ENCODE measurements at regions of chr2 and their contacts with region 1.

Region 1: GRCh38 chr2:290090-290722 is 2.3 kb upstream of the ALKAL2 start:
- DNase-seq: peak; percentile 43 to 87 (median 80)
- H3K4me3 ChIP-seq: peak overlapping the region; percentile 40 to 88 (median 69)
- H3K27ac ChIP-seq: peak overlapping the region in 7 of 59 donors; percentile 7 to 45 (median 28)
- H3K27me3 ChIP-seq: peaks cover 0 to 31% (median 11%) of the 10 kb centered on the region in 45 donors
- CTCF ChIP-seq: peak; percentile 14 to 97 (median 84)

Region 2: DNA sequence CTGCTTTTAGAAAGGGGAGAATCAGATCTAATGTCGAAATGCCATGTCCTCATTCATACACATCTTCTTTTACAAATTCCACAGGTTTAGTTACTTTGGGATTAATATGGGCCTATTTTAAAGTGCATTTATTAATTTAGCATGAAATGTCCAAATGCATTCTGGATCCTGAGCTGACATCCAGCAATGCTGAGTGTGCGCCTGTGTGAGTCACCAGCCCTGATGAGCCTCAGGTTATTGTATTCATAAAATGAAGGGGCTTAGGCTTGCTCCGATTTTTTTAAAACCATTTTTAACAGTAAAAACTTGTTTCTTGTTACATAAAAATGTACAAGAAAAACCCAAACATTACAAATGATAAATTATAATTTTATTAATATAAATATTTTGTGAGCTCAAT is 120.5 kb before region 1 on chr2:
- intact Hi-C with region 1: loop called (anchors 1 to 5 kb)
- DNase-seq: no peak
- H3K4me3 ChIP-seq: no peak overlapping the region
- H3K27ac ChIP-seq: no peak overlapping the region
- H3K27me3 ChIP-seq: no peaks in the 10 kb centered on the region
- CTCF ChIP-seq: no peak

Region 3: GRCh38 chr2:175880-176800 is 114.1 kb before region 1 on chr2:
- intact Hi-C with region 1: loop called (anchors 1 to 5 kb)
- DNase-seq: no peak
- H3K4me3 ChIP-seq: peak overlapping the region in 4 of 59 donors; percentile 11 to 32 (median 22)
- H3K27ac ChIP-seq: peak overlapping the region in 19 of 59 donors; percentile 1 to 79 (median 40)
- H3K27me3 ChIP-seq: no peaks in the 10 kb centered on the region
- CTCF ChIP-seq: no peak

Region 4: GRCh38 chr2:254241-254640 is 36.0 kb before region 1 on chr2:
- intact Hi-C with region 1: loop called in 1 of 2 experiments (anchors 5 kb)
- DNase-seq: no peak
- H3K4me3 ChIP-seq: no peak overlapping the region
- H3K27ac ChIP-seq: no peak overlapping the region
- H3K27me3 ChIP-seq: no peaks in the 10 kb centered on the region
- CTCF ChIP-seq: no peak

Region 5: GRCh38 chr2:264660-265468 is 25.3 kb before region 1 on chr2 and contains the start of gene ACP1:
- intact Hi-C with region 1: loop called in 1 of 2 experiments (anchors 2 kb)
- DNase-seq: peak; percentile 82 to 94 (median 87)
- H3K4me3 ChIP-seq: peak within 1 kb of the TSS; percentile 65 to 98 (median 90)
- H3K27ac ChIP-seq: peak within 1 kb of the TSS in 53 of 59 donors; percentile 2 to 88 (median 63)
- H3K27me3 ChIP-seq: no peaks in the 10 kb centered on the region
- CTCF ChIP-seq: peak in 37 of 56 donors; percentile 6 to 56 (median 29)
- total RNA-seq, gene ACP1: 38.8 to 104 (median 76.9) TPM

Region 6: DNA sequence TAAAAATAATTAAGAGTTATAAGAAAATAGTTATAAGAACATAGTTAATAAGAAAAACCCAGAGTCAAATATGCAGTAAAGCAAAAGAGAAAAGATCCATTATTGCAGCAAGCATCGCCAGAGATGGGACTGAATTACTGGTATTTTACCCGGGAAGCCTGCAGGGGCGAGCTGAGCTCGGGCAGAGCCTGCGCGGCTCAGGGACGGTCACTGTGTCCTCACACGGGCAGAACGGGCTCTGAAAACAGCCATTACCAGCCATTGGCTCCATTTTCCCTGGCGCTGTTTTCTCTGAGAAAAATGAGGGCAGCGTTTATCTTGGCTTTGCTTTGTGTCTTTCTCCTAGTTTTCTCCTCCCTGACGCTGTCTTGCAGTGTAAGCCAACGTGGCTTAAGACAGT is 93.0 kb after region 1 on chr2:
- intact Hi-C with region 1: loop called in 1 of 2 experiments (anchors 5 kb)
- DNase-seq: peak in 8 of 10 donors; percentile 34 to 76 (median 60)
- H3K4me3 ChIP-seq: peak overlapping the region in 49 of 59 donors; percentile 5 to 63 (median 34)
- H3K27ac ChIP-seq: peak overlapping the region in 35 of 59 donors; percentile 3 to 77 (median 48)
- H3K27me3 ChIP-seq: no peaks in the 10 kb centered on the region
- CTCF ChIP-seq: peak in 42 of 56 donors; percentile 12 to 61 (median 29)

Region 7: GRCh38 chr2:636641-637405 is 346.6 kb after region 1 on chr2:
- intact Hi-C with region 1: loop called in 1 of 2 experiments (anchors 2 kb)
- DNase-seq: peak in 9 of 10 donors; percentile 54 to 83 (median 72)
- H3K4me3 ChIP-seq: peak overlapping the region in 58 of 59 donors; percentile 12 to 64 (median 48)
- H3K27ac ChIP-seq: peak overlapping the region in 4 of 59 donors; percentile 30 to 67 (median 48)
- H3K27me3 ChIP-seq: peaks cover 0 to 3% (median 0%) of the 10 kb centered on the region in 45 donors
- CTCF ChIP-seq: peak; percentile 79 to 97 (median 90)

Measured in dorsolateral prefrontal cortex (tissue), 120 donors.